Ascending aorta (tissue), 2 donors: ENCODE measurements at regions of chr16 and their contacts with region 1.

Region 1: GRCh38 chr16:234468-235305 is at the start of gene FAM234A:
- DNase-seq: peak; percentile 73 to 95
- H3K4me3 ChIP-seq: peak within 1 kb of the TSS; percentile 70 to 75
- H3K27ac ChIP-seq: peak within 1 kb of the TSS; percentile 82 to 91
- H3K4me1 ChIP-seq: peaks cover 6 to 9% of the 10 kb centered on the region in 2 donors
- H3K27me3 ChIP-seq: no peaks in the 10 kb centered on the region
- CTCF ChIP-seq: peak; percentile 33 to 49 (median 41)
- total RNA-seq, gene FAM234A: 67.7 TPM

Region 2: DNA sequence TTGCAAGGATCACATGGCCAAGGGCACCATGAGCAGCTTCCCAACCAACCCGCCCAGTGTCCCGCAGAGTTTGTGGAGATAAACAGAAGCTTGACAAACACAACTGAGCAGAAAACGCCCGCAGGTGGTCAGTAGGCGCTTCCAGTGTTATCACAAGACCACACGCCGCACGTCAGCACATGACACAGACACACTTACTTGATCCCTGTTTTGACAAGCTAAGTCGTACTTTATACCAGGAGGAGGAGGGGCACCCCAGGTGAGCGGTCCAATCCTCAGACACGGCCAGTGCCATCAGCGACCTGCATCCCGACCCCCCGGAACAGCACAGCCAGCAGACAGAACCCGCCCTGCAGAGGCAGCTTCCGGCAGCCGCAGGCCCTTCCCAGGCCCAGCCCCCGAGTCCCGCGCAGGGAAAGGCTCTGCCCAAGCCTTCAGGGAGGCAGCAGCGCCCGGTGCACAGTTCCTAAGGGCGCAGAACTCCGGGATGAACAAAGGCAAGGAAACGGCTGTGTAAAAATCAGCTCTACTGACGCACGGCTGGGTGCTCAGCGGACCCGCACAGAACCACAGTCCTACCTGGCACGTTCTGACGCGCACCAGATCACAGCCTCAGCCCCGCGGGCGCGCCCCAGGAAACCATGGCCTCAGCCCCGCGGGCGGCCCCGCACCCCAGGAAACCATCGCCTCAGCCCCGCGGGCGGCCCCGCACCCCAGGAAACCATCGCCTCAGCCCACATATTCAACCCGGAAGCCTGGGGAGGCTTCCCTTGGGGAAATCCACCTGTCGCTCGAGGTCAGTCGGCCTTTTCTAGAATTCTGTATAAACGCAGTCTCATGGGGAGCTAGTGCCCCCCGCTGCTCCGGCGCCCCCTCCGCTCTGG is 90.0 kb after region 1 on chr16:
- intact Hi-C with region 1: no loop called
- DNase-seq: no peak
- H3K4me3 ChIP-seq: peak overlapping the region in 1 of 2 donors; percentile 19
- H3K27ac ChIP-seq: no peak overlapping the region
- H3K4me1 ChIP-seq: peaks cover 0 to 7% of the 10 kb centered on the region in 2 donors
- H3K27me3 ChIP-seq: no peaks in the 10 kb centered on the region
- CTCF ChIP-seq: no peak

Region 3: GRCh38 chr16:589658-590159 is 355.0 kb after region 1 on chr16 and contains the start of gene RAB40C:
- intact Hi-C with region 1: loop called (anchors 5 kb)
- DNase-seq: peak; percentile 92 to 99
- H3K4me3 ChIP-seq: peak within 1 kb of the TSS; percentile 85 to 92
- H3K27ac ChIP-seq: peak within 1 kb of the TSS; percentile 92 to 94
- H3K4me1 ChIP-seq: peaks cover 8 to 32% of the 10 kb centered on the region in 2 donors
- H3K27me3 ChIP-seq: no peaks in the 10 kb centered on the region
- CTCF ChIP-seq: no peak
- total RNA-seq, gene RAB40C: 29.8 TPM